ENCODE measurements at regions of chr22 and their contacts with region 1.

Region 1: GRCh38 chr22:20418211-20418788 is 19.3 kb downstream of the SCARF2 start:
- DNase-seq: peak; percentile 71
- ATAC-seq: peak; percentile 91
- H3K4me3 ChIP-seq: peak overlapping the region; percentile 73
- H3K27ac ChIP-seq: no peak overlapping the region
- H3K4me1 ChIP-seq: no peaks in the 10 kb centered on the region
- H3K27me3 ChIP-seq: no peaks in the 10 kb centered on the region
- CTCF ChIP-seq: peak; percentile 68

Region 2: GRCh38 chr22:20156611-20157429 is 261.5 kb before region 1 on chr22:
- CTCF ChIA-PET with region 1: interaction called, 10 read pairs
- POLR2A ChIA-PET with region 1: no interaction called
- intact Hi-C with region 1: no loop called
- DNase-seq: peak; percentile 82
- ATAC-seq: peak; percentile 90
- H3K4me3 ChIP-seq: no peak overlapping the region
- H3K27ac ChIP-seq: no peak overlapping the region
- H3K4me1 ChIP-seq: no peaks in the 10 kb centered on the region
- H3K27me3 ChIP-seq: no peaks in the 10 kb centered on the region
- CTCF ChIP-seq: peak; percentile 77

Region 3: GRCh38 chr22:20479612-20480196 is 61.4 kb after region 1 on chr22:
- CTCF ChIA-PET with region 1: no interaction called
- POLR2A ChIA-PET with region 1: interaction called, 20 read pairs
- intact Hi-C with region 1: no loop called
- DNase-seq: no peak
- ATAC-seq: no peak
- H3K4me3 ChIP-seq: no peak overlapping the region
- H3K27ac ChIP-seq: no peak overlapping the region
- H3K4me1 ChIP-seq: no peaks in the 10 kb centered on the region
- H3K27me3 ChIP-seq: no peaks in the 10 kb centered on the region
- CTCF ChIP-seq: no peak

Region 4: GRCh38 chr22:20531315-20532201 is 113.3 kb after region 1 on chr22:
- CTCF ChIA-PET with region 1: interaction called, 13 read pairs
- POLR2A ChIA-PET with region 1: no interaction called
- intact Hi-C with region 1: no loop called
- DNase-seq: peak; percentile 91
- ATAC-seq: peak; percentile 88
- H3K4me3 ChIP-seq: peak overlapping the region; percentile 40; the same call in 1 of the 2 replicates
- H3K27ac ChIP-seq: peak overlapping the region; percentile 99
- H3K4me1 ChIP-seq: peaks cover 39% of the 10 kb centered on the region
- H3K27me3 ChIP-seq: no peaks in the 10 kb centered on the region
- CTCF ChIP-seq: no peak

Region 5: GRCh38 chr22:20756846-20757245 is 338.5 kb after region 1 on chr22:
- CTCF ChIA-PET with region 1: interaction called, 14 read pairs
- POLR2A ChIA-PET with region 1: no interaction called
- intact Hi-C with region 1: no loop called
- DNase-seq: no peak
- ATAC-seq: no peak
- H3K4me3 ChIP-seq: no peak overlapping the region
- H3K27ac ChIP-seq: no peak overlapping the region
- H3K4me1 ChIP-seq: no peaks in the 10 kb centered on the region
- H3K27me3 ChIP-seq: no peaks in the 10 kb centered on the region
- CTCF ChIP-seq: no peak